ENCODE measurements at regions of chr1 and their contacts with region 1.

Region 1: GRCh38 chr1:61084491-61085031 is 2.2 kb downstream of the NFIA start:
- DNase-seq: no peak

Region 2: GRCh38 chr1:61104220-61104671 is 19.7 kb after region 1 on chr1:
- intact Hi-C with region 1: loop called (anchors 2 kb)
- DNase-seq: no peak

Region 3: DNA sequence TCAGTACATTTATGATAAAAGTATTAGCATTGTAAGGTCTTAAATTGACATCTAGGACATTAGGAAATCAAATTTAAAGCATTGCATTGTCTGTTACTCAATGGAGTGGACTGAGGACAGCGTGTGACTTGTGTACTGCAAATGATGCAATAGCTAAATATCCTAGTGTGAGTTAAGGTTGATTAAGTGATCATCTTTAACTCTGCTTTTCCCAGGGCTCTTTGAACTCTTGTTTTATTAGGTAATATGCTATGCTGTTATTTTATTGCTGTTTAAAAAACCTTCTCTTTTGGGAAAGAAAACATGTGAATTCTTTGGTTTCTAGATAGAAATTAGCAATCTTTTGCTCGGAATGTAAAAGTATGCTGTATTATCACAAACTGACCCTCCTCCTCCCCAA is 36.4 kb after region 1 on chr1:
- intact Hi-C with region 1: loop called (anchors 2 kb)
- DNase-seq: no peak

Region 4: DNA sequence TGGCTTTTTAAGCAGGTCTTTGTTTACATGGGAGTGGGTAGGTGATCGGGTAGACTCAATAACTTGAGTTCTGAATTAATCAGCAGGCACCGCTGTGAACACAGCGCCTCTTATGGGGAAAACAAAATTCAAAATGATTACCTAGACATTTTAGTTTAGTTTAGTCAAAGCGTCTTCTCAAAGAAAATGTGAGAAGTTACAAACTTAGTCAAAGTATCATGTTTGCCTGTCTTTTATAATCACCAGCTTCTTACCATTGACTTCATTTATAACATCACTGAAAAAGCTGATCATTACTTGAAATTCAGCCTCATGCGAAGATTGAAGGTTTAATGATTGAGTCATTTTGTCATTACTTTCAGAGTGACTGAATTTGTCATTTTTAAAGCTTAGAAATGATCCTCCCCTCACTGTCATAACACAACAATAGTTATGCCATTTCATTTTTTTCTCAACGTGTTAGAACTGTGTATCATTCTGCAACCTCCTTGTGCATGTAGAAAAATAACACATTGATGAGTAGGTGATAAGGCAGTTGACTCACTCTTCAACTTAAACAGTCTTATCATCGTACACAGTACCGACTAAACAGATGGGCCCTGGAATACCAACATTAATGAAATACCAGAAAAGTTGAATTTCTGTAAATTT is 186.3 kb after region 1 on chr1:
- intact Hi-C with region 1: loop called (anchors 5 kb)
- DNase-seq: no peak